ENCODE measurements at regions of chr2 and their contacts with region 1.

Region 1: DNA sequence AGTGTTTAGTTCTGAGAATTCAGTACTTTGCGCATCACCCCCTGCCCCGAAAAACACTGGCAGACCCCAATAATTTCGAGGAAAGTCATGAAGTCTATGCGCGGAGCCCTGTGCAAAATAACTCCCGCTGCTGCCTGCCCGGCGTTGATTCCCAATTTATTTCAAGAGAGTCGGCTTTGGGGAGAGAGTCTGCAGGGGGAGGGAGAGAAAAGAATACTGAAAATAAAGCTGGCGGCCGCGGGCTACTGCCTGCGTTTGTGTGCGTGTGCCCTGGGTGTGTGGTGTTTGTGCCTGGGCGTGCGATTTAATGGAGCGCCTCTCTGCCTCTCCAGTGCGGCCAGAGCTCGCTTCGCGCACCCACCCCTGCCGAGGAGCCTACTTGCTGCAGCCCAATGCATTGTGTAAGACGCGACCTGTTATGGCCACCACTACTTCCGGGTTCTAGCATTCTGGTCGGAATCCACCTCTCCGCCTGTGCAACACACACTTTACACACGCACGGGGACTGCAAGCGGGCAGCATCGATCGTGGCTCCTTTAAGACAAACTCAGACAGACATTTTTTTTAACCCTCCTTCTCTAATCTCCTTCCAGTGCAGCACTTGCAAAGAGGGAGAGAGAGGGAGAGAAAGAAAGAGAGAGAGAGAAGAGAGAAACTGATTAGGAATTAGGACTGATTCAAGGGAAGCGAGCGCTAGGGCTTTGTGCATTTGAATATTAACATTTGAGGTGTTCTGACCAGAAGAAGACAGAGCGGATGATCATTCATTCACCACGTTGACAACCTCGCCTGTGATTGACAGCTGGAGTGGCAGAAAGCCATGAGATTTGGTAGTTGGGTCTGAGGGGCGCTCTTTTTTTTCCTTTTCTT is at the start of gene MEIS1:
- DNase-seq: peak; percentile 88 to 94 (median 91)
- ATAC-seq: peak; percentile 86 to 91 (median 88)
- H3K4me3 ChIP-seq: peak within 1 kb of the TSS; percentile 53 to 91 (median 74)
- H3K27ac ChIP-seq: peak within 1 kb of the TSS; percentile 83 to 96 (median 92)
- H3K4me1 ChIP-seq: peaks cover 0 to 20% (median 0%) of the 10 kb centered on the region in 12 donors
- H3K27me3 ChIP-seq: peaks cover 0 to 65% (median 0%) of the 10 kb centered on the region in 9 donors
- CTCF ChIP-seq: peak in 1 of 12 donors; percentile 8
- POLR2A ChIP-seq: peak; percentile 62 to 85
- total RNA-seq, gene MEIS1: 21.3 to 50.8 (median 41.8) TPM

Region 2: DNA sequence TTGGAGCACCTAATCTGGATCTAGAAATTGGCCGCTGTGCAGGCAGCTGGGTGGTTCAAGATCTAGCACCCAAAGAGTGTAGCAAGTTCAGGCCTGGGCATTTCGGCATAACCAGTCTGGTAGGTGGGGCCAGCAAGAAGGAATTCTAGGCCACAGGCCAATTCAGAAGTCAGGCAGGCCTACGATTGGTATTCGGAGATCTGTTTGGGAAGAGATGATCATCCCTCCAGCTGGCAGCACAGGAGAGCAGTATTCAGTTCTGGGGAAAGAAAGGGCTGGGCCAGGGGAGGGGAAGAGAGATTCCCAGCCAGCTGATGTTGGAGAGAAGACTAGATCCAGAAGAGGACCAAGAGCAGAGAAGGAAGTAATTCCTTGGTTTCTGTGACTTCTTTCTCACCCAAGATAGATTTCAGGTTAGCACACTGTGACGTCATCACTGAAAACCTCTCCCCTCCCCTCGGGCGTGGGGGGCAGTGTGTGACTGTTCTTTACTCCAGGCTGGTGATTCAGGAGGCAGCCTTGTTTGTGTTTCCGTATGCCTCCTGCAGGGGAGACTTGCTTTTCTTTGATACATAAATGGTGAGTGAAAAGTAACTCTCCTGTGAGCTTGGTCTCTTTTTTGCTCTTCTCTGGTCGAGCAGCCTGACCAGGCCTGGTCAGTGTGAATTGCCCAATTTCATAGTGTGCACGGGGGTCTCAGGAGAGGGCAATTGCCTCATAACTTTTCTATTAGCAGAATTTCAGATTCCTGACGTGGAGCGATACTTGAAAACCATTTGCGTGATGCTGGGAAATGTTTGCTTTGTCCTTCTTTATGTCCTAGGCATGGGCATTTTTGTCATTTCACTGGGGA is 61.1 kb after region 1 on chr2:
- intact Hi-C with region 1: loop called in 6 of 10 experiments (anchors 2 to 10 kb)
- DNase-seq: peak in 4 of 5 donors; percentile 30 to 60 (median 53)
- ATAC-seq: peak; percentile 63 to 83 (median 72)
- H3K4me3 ChIP-seq: peak overlapping the region in 1 of 12 donors; percentile 0
- H3K27ac ChIP-seq: peak overlapping the region in 11 of 12 donors; percentile 26 to 77 (median 56)
- H3K4me1 ChIP-seq: peaks cover 0 to 56% (median 25%) of the 10 kb centered on the region in 12 donors
- H3K27me3 ChIP-seq: no peaks in the 10 kb centered on the region
- CTCF ChIP-seq: peak in 3 of 12 donors; percentile 10 to 30 (median 22)
- POLR2A ChIP-seq: no peak

Region 3: DNA sequence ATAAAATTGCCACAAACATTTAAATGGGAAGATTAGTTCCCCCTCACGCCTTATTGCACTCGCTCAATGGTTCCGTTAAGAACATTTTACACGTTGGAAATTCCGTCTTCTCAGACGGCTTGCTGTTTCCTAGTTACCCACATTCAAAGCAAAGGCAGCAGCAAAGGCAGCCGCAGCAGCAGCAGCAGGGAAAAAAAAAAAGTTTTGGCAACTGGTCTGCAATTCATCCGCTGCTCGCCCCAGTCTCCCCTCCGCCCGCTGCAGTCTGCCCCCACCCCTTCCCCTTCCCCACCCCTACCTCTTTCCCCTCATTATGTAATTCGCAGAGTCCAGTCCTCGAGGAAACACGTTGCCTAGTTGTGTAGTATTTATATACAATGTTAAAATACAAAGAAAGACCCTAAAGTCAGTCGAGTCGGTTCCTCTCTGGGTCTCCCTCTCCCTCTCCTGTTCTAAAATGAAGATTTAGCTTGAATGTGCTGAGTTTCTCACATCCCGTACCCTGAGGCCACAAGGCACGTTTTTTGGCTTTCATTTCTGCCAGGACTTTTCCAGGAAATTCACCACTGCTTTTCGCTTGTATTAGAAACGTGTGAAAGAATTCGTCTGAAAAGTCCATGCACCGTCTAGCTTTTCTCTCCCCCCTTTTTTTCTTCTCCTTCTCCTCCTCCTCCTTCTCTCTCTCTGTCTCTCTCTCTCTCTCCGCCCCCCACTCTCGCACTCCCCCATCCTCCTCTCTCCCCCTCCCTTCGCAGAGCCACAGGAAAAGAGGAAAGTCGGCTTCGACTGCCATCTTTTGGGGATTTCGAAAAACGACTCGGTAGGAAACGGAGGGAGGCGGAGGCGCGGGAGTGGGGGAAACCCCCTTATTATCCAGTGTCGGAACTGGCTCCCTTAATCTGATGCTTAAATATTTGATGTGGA is 140.0 kb after region 1 on chr2:
- intact Hi-C with region 1: loop called in 8 of 10 experiments (anchors 1 to 5 kb)
- DNase-seq: peak; percentile 46 to 68 (median 61)
- ATAC-seq: peak; percentile 51 to 81 (median 71)
- H3K4me3 ChIP-seq: peak overlapping the region; percentile 27 to 66 (median 52)
- H3K27ac ChIP-seq: peak overlapping the region in 5 of 12 donors; percentile 27 to 97 (median 53)
- H3K4me1 ChIP-seq: peaks cover 0 to 35% (median 25%) of the 10 kb centered on the region in 12 donors
- H3K27me3 ChIP-seq: peaks cover 36 to 63% (median 46%) of the 10 kb centered on the region in 9 donors
- CTCF ChIP-seq: peak in 11 of 12 donors; percentile 28 to 63 (median 46)
- POLR2A ChIP-seq: no peak

Region 4: DNA sequence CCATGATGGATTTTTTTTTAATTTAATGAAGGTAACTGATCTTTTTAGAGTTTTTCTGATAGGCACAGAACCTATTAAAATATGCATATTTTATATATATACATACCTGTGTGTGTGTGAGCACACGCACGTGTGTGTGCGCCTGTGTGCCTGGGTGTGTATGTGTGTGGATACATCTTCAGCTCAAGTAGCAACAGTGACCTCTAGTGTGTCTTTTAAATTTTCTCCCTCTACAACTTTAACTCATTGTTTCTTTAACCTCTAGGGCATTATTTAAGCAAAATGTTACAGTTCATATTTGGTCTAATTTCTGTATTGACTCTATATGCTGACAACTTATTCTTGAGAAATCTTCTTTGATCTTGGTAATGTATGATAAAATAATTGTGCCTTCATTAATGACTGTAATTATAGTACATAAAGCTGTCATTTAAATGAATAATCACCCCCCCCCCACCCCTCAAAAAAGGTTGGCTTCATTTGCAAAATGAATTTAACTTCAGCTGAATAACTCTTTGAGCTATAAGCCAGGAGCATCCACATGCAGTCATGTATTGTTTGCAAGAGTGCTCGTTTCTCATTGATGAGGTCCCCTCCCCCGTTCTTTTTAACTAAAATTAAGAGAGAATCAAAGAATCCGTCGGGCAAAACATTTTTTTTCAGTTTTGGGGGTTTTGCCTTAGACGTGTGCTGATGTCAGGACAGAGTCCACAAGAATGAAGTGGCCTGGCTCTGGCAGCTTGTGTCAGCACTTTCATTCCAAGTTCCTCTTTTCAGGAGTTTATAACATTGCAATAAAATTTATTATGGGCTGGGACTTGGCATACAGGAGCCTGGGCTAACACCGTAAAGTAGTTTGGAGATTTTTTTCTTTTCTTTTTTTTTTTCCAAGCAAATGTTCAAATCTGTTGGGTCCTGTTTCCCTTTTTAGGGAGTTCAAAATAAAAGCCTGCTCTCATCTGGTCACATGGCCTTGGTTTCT is 1042.2 kb after region 1 on chr2:
- intact Hi-C with region 1: loop called in 2 of 10 experiments (anchors 5 to 10 kb)
- DNase-seq: no peak
- ATAC-seq: peak in 3 of 4 donors; percentile 61 to 67 (median 65)
- H3K4me3 ChIP-seq: no peak overlapping the region
- H3K27ac ChIP-seq: no peak overlapping the region
- H3K4me1 ChIP-seq: peaks cover 0 to 6% (median 0%) of the 10 kb centered on the region in 12 donors
- H3K27me3 ChIP-seq: no peaks in the 10 kb centered on the region
- CTCF ChIP-seq: peak; percentile 13 to 60 (median 40)
- POLR2A ChIP-seq: no peak

Region 5: DNA sequence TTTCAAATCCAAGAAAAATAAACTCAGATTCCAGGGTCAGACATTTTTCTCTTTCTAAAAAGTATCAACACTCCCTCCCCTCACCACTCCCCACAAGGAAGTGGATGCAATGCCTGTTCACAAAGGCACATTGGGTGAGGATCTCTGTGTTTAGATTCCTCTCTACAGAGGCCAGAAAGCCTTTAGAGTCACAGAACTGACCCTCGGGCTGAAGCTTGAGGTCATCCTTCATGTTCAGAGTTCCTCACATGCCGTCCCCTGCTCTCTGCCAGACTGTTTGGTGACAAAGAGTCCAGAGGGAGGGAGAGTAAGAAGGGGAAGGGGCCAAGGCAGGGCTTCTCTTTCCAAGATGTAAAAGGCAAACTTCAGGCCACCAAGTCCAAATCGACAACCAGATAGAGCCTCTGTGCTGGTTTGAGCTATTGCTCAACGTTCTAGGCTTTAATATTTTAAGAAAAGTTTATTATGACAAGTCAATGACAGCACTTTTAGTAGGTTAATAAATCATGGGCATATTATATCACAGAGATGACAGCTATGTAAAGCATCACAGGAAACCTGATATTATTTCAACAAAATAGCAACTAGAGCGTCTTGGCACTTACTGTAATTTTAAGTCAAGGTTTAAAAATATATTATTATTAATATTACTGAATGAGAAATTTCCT is 1231.6 kb after region 1 on chr2:
- intact Hi-C with region 1: loop called in 1 of 10 experiments (anchors 5 kb)
- DNase-seq: peak in 3 of 5 donors; percentile 25 to 71 (median 42)
- ATAC-seq: peak; percentile 86 to 97 (median 93)
- H3K4me3 ChIP-seq: no peak overlapping the region
- H3K27ac ChIP-seq: peak overlapping the region in 9 of 12 donors; percentile 13 to 85 (median 48)
- H3K4me1 ChIP-seq: peaks cover 0 to 26% (median 10%) of the 10 kb centered on the region in 12 donors
- H3K27me3 ChIP-seq: no peaks in the 10 kb centered on the region
- CTCF ChIP-seq: no peak
- POLR2A ChIP-seq: no peak

Measured in heart left ventricle (tissue), 16 donors.